ENCODE measurements at regions of chr4 and their contacts with region 1.

Region 1: GRCh38 chr4:184538023-184538599 is 63.8 kb upstream of the IRF2 start:
- DNase-seq: peak; percentile 89
- H3K4me3 ChIP-seq: peak overlapping the region; percentile 29 to 64 (median 55)
- H3K27ac ChIP-seq: peak overlapping the region; percentile 93 to 97 (median 96)
- H3K4me1 ChIP-seq: peaks cover 7 to 24% (median 11%) of the 10 kb centered on the region in 4 donors
- H3K27me3 ChIP-seq: no peaks in the 10 kb centered on the region
- CTCF ChIP-seq: peak; percentile 58 to 90 (median 63)
- EP300 ChIP-seq: no peak
- POLR2A ChIP-seq: no peak

Region 2: DNA sequence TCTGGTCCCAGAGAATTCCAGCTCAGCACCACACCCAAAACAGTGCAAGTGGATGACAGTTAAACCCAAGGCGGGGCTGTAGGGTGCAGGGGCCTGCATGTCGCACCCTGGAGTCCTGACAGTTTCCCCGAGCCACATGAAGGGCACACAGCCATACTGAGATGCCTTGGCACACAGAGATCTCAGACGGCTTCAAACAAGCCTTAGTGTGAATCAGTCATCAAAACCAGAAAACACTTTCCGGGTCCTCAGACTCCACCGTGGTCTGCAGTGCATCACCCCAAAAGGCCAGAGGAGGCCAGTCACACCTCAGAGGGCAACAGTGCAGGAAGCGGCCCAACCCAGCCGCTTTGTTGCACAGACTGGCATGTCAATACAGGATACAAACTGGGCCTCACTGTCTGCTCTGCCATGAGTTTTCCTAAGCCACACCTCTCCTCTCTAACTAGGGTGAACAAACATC is 255.8 kb before region 1 on chr4:
- in situ Hi-C with region 1: loop called in 2 of 4 experiments (anchors 10 kb)
- intact Hi-C with region 1: loop called (anchors 10 kb)
- DNase-seq: peak; percentile 65
- H3K4me3 ChIP-seq: no peak overlapping the region
- H3K27ac ChIP-seq: peak overlapping the region; percentile 63 to 81 (median 70)
- H3K4me1 ChIP-seq: peaks cover 9 to 30% (median 15%) of the 10 kb centered on the region in 4 donors
- H3K27me3 ChIP-seq: no peaks in the 10 kb centered on the region
- CTCF ChIP-seq: peak in 4 of 5 experiments; percentile 13 to 57 (median 33)
- EP300 ChIP-seq: no peak
- POLR2A ChIP-seq: no peak

Region 3: DNA sequence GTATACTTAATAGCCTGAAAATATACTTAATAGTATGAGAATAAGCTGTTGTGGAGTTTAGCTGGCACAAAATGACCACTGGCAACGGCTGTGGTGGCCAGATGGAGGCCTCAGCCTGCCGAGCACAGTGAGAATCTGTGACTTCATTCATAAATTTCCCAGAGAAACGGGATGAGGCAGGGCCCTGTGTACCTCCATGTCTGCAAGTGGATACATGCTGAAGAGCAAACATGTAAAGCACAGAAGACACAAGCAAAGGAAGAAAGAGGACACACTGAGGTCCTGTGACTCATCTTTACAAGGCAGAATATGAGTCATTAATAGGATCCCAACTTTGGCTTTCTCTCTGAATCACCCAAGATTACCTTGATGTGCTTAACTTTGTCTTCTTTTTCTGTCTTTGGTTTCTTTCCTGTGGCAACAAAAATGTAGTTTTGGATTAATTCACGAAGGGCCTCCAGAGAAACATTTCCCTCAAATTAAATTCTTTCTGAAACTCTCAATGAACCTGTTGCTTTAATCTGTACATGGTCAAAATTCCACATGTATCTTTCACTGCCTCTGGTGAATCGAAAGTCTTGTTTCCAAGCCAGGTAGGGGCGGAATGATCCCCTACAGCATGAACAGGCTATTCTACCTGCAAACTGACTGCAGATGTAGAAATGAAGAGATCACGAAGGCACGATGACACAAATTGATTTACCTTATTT is 120.2 kb before region 1 on chr4:
- in situ Hi-C with region 1: loop called in 3 of 4 experiments (anchors 25 kb)
- intact Hi-C with region 1: no loop called
- DNase-seq: no peak
- H3K4me3 ChIP-seq: no peak overlapping the region
- H3K27ac ChIP-seq: peak overlapping the region; percentile 65 to 76 (median 72)
- H3K4me1 ChIP-seq: peaks cover 5 to 45% (median 20%) of the 10 kb centered on the region in 4 donors
- H3K27me3 ChIP-seq: no peaks in the 10 kb centered on the region
- CTCF ChIP-seq: no peak
- EP300 ChIP-seq: no peak
- POLR2A ChIP-seq: no peak